ENCODE measurements at regions of chr12 and their contacts with region 1.

Region 1: GRCh38 chr12:88580051-88580871 is at the start of gene KITLG:
- DNase-seq: peak; percentile 80 to 84
- ATAC-seq: peak; percentile 85 to 92
- H3K4me3 ChIP-seq: peak within 1 kb of the TSS; percentile 70
- H3K27ac ChIP-seq: peak within 1 kb of the TSS; percentile 65 to 86
- H3K4me1 ChIP-seq: peaks cover 29% of the 10 kb centered on the region
- CTCF ChIP-seq: peak; percentile 49
- EP300 ChIP-seq: no peak
- POLR2A ChIP-seq: peak; percentile 95
- RAD21 ChIP-seq: peak; percentile 46 to 75
- polyA plus RNA-seq, gene KITLG: 7.6 and 10.1 TPM in 2 replicates

Region 2: DNA sequence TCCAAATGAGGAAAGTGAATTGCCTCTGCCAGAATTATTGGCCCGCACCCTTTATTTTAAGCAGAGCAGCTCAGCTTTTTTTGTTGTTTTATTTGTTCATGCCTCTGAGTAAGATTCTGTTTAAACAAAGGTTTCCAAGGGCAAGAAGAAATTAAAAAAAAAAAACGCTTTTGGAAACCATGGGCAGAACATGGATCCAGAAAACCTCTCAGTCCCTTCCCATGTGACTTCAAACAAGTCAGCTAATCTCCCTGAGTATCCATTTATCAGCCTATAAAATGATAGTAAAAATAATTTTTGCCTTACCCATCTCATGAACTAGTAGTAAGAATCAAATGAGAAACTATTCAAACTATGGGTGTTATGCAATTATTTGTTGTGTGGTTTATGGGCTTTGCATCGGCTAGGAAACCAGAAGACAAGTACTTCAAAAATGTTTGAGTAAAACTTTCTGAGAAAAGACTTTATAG is 27.6 kb before region 1 on chr12:
- CTCF ChIA-PET with region 1: interaction called, 8 read pairs
- POLR2A ChIA-PET with region 1: interaction called, 12 read pairs
- DNase-seq: peak; percentile 7 to 77
- ATAC-seq: peak; percentile 58 to 81; a peak in 5 of 6 replicates
- H3K4me3 ChIP-seq: no peak overlapping the region
- H3K27ac ChIP-seq: peak overlapping the region; percentile 60 to 75; a peak in 5 of 6 replicates
- H3K4me1 ChIP-seq: peaks cover 45% of the 10 kb centered on the region
- CTCF ChIP-seq: no peak
- EP300 ChIP-seq: peak; percentile 42 to 56; a peak in 3 of 5 replicates
- POLR2A ChIP-seq: no peak
- RAD21 ChIP-seq: no peak

Region 3: DNA sequence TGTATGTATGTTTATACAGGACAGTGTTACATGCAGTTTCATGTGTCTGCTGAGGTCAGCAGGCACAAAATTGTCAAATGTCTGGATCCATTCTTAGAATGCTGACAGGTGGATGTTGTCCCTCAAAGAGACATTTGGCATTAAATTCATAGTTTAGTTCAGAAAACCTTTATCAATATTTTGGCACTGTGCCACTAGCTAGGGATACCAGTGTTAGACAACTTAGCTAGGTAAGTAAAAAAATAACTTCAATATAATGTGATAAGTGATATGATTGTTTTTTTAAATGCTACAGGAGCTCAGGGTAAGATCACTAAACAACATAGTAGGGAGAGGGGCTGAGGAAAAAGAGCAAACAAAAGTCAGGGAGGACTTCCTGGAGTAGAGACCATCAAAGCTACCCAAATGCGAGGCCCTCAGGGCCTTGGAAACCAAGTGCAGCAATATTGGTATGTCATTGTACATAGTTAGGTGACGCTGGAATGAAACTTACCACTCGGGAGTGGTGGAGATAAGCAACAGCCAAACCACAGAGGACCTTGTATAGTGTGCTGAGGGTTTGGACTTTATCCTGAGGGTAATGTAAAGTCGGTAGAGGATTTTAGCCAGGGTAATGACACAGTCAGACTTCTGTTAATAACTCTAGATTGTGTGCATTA is 14.0 kb before region 1 on chr12:
- CTCF ChIA-PET with region 1: interaction called, 11 read pairs
- POLR2A ChIA-PET with region 1: no interaction called
- DNase-seq: no peak
- ATAC-seq: peak in 1 of 2 experiments; percentile 31; a peak in 1 of 6 replicates
- H3K4me3 ChIP-seq: no peak overlapping the region
- H3K27ac ChIP-seq: 0 out of 6 replicates have a peak overlapping the region, but pooled peaks of 1 of the 2 experiments have one; percentile 30
- H3K4me1 ChIP-seq: peaks cover 24% of the 10 kb centered on the region
- CTCF ChIP-seq: no peak
- EP300 ChIP-seq: no peak
- POLR2A ChIP-seq: no peak
- RAD21 ChIP-seq: no peak

Region 4: DNA sequence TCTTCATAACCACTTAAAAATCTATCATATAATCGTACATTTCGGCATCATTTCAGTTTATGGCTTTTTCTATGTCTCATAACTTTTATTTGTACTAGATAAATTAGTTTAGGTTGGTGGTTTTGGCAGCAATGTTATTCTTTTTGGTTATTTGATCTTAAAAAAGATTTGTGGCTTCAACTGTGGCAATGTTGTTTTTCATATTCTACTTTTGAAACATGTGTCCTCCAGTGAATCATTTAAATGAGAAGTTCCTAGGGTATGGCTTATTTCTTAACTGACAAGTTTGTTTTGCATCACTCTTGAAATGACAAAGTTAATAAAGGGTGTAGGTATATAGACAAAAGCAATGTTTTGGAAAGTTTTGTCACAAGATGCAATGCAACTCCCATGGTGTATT is 11.1 kb after region 1 on chr12:
- CTCF ChIA-PET with region 1: interaction called, 10 read pairs
- POLR2A ChIA-PET with region 1: no interaction called
- DNase-seq: no peak
- ATAC-seq: no peak
- H3K4me3 ChIP-seq: no peak overlapping the region
- H3K27ac ChIP-seq: no peak overlapping the region
- H3K4me1 ChIP-seq: no peaks in the 10 kb centered on the region
- CTCF ChIP-seq: no peak
- EP300 ChIP-seq: no peak
- POLR2A ChIP-seq: no peak
- RAD21 ChIP-seq: no peak

Region 5: GRCh38 chr12:88604646-88605045 is 24.4 kb after region 1 on chr12:
- CTCF ChIA-PET with region 1: no interaction called
- POLR2A ChIA-PET with region 1: no interaction called
- DNase-seq: no peak
- ATAC-seq: no peak
- H3K4me3 ChIP-seq: no peak overlapping the region
- H3K27ac ChIP-seq: no peak overlapping the region
- H3K4me1 ChIP-seq: no peaks in the 10 kb centered on the region
- CTCF ChIP-seq: no peak
- EP300 ChIP-seq: no peak
- POLR2A ChIP-seq: no peak
- RAD21 ChIP-seq: no peak

Region 6: DNA sequence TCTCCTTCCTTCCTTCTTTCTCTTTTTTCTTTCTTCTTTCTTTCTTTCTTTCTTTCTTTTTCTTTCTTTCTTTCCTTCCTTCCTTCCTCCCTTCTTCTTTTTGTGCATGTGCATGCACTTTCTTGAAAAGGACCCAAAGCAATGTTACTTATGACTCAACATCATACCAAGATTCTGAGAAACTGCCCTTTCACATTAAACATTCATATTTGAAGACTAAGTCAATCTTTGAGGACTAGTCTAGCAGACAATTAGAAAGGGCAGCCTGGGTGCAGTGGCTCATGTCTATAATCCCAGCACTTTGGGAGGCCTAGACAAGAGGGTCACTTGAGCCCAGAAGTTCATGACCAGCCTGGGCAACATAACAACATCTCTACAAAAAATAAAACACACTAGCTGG is 212.8 kb after region 1 on chr12:
- CTCF ChIA-PET with region 1: no interaction called
- POLR2A ChIA-PET with region 1: no interaction called
- DNase-seq: no peak
- ATAC-seq: no peak
- H3K4me3 ChIP-seq: no peak overlapping the region
- H3K27ac ChIP-seq: no peak overlapping the region
- H3K4me1 ChIP-seq: no peaks in the 10 kb centered on the region
- CTCF ChIP-seq: no peak
- EP300 ChIP-seq: no peak
- POLR2A ChIP-seq: no peak
- RAD21 ChIP-seq: no peak

Measured in A549 (cell line).